ENCODE measurements at regions of chr19 and their contacts with region 1.

Region 1: GRCh38 chr19:3830621-3831589 is 37.9 kb downstream of the ZFR2 start:
- DNase-seq: no peak
- H3K4me3 ChIP-seq: no peak overlapping the region
- CTCF ChIP-seq: no peak

Region 2: DNA sequence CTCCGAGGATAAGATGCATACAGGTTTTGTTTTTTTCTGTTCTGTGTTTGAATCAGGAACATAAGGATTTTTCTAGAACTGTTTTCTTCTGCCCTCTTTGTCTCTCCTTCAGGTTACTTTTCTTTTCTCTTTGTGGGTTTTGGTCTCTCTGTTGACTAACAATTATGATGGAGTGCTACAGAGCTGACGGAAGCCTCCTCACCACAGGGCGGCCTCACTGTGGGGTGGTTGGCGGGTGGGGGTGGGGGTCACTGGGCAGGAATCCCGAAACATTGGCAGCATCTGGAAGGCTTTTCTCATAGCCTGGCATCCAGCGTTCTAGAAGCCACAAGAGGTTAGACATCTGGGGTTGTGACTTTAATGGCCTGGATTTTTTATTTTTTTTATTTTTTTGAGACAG is 32.8 kb before region 1 on chr19:
- in situ Hi-C with region 1: loop called (anchors 5 kb)
- DNase-seq: no peak
- H3K4me3 ChIP-seq: no peak overlapping the region
- CTCF ChIP-seq: no peak

Region 3: GRCh38 chr19:3868770-3869456 is 38.0 kb after region 1 on chr19 and contains the start of gene ZFR2:
- in situ Hi-C with region 1: loop called (anchors 5 kb)
- DNase-seq: no peak
- H3K4me3 ChIP-seq: no peak within 1 kb of the TSS
- CTCF ChIP-seq: no peak